PC-3 (cell line): ENCODE measurements at regions of chr20 and their contacts with region 1.

Region 1: GRCh38 chr20:53915446-53916172 is 154.8 kb downstream of the BCAS1 start:
- DNase-seq: peak; percentile 100
- ATAC-seq: peak; percentile 88
- H3K4me3 ChIP-seq: peak overlapping the region; percentile 72
- H3K27ac ChIP-seq: peak overlapping the region; percentile 84
- H3K4me1 ChIP-seq: peaks cover 48% of the 10 kb centered on the region
- H3K27me3 ChIP-seq: no peaks in the 10 kb centered on the region
- CTCF ChIP-seq: peak; percentile 99

Region 2: DNA sequence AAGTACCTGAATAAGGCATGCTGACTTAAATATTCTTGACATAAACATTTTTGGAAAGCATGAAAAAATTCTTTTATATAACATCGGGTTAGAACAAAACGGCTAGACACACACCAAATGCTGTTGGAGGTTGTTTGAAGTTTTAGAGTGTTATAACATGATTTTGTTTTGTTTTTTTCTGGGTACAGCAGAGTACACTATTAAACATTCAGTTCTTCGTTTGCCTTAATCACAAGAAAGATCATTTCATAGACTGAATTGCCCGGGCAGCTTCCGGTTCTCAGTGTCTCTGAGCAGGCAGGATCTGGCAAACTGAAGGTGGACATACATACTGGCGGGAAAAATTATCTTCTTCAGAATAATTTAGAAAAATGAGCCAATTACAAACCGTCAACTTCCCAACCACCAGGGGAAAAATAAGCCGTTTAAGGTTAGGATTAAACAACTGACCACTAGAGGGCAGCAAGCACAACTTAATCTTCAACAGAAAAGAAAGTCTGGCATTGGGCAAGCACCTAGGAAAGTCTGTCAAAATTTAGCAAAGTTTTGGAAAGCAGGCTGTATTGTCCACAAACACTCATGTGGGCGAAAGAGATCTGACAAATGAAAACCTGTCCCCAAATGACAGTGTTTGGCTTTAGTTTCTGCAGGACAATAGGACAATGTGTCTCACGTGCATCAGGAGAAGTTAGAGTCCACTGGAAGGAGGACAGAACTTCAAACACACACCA is 337.0 kb before region 1 on chr20:
- CTCF ChIA-PET with region 1: no interaction called
- POLR2A ChIA-PET with region 1: no interaction called
- intact Hi-C with region 1: loop called (anchors 1 kb)
- DNase-seq: peak; percentile 100
- ATAC-seq: peak; percentile 12
- H3K4me3 ChIP-seq: peak overlapping the region; percentile 75
- H3K27ac ChIP-seq: peak overlapping the region; percentile 88
- H3K4me1 ChIP-seq: peaks cover 59% of the 10 kb centered on the region
- H3K27me3 ChIP-seq: no peaks in the 10 kb centered on the region
- CTCF ChIP-seq: peak; percentile 99

Region 3: DNA sequence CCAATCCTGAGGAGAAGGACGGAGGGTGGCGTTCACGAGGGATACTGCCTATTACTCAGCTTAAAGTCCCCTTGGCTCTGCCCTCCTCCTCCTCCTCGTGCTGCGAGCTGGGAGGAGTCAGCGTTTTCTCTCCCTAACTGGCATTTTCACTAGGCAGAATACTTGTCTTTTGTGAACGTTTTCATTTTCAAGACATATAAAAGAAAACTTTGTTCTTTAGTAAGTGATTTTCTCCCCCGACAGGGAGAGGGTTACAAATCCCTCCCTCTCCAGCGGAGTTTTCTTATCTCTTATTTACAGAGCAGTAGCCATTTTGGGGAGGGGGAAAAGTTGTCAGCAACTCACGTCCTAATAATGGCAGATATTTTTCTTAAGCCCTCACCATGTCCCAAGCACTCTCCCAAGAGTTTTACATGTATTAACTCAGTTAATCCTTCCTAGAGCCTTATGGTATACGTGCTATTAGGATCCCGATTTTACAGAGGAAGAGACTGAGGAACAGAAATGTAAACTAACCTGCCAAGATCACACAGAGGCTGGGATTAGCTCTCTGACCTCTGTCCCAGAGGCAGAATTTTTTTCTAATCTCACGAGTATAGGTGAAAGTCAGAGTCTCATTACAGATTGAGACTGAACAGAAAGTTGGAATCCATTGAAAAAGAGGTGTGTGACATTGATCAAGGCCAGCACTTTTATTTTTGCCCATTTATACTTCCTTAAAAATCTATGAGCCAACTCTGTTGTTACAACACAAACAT is 292.0 kb before region 1 on chr20:
- CTCF ChIA-PET with region 1: interaction called, 5 read pairs
- POLR2A ChIA-PET with region 1: interaction called, 3 read pairs
- intact Hi-C with region 1: loop called (anchors 1 kb)
- DNase-seq: peak; percentile 89
- ATAC-seq: peak; percentile 62
- H3K4me3 ChIP-seq: peak overlapping the region; percentile 63
- H3K27ac ChIP-seq: peak overlapping the region; percentile 89
- H3K4me1 ChIP-seq: peaks cover 41% of the 10 kb centered on the region
- H3K27me3 ChIP-seq: no peaks in the 10 kb centered on the region
- CTCF ChIP-seq: peak; percentile 38; the same call in 1 of the 2 replicates

Region 4: GRCh38 chr20:53786445-53787267 is 129.0 kb before region 1 on chr20:
- CTCF ChIA-PET with region 1: interaction called, 5 read pairs
- POLR2A ChIA-PET with region 1: interaction called, 3 read pairs
- intact Hi-C with region 1: loop called (anchors 1 kb)
- DNase-seq: peak; percentile 71
- ATAC-seq: peak; percentile 46
- H3K4me3 ChIP-seq: peak overlapping the region; percentile 27
- H3K27ac ChIP-seq: peak overlapping the region; percentile 87
- H3K4me1 ChIP-seq: peaks cover 58% of the 10 kb centered on the region
- H3K27me3 ChIP-seq: no peaks in the 10 kb centered on the region
- CTCF ChIP-seq: peak; percentile 39

Region 5: GRCh38 chr20:53837126-53837826 is 78.3 kb before region 1 on chr20:
- CTCF ChIA-PET with region 1: no interaction called
- POLR2A ChIA-PET with region 1: interaction called, 14 read pairs
- intact Hi-C with region 1: no loop called
- DNase-seq: no peak
- ATAC-seq: no peak
- H3K4me3 ChIP-seq: no peak overlapping the region
- H3K27ac ChIP-seq: no peak overlapping the region
- H3K4me1 ChIP-seq: peaks cover 23% of the 10 kb centered on the region
- H3K27me3 ChIP-seq: no peaks in the 10 kb centered on the region
- CTCF ChIP-seq: no peak

Region 6: GRCh38 chr20:53883098-53883811 is 32.4 kb before region 1 on chr20:
- CTCF ChIA-PET with region 1: no interaction called
- POLR2A ChIA-PET with region 1: no interaction called
- intact Hi-C with region 1: no loop called
- DNase-seq: peak; percentile 89
- ATAC-seq: peak; percentile 68
- H3K4me3 ChIP-seq: no peak overlapping the region
- H3K27ac ChIP-seq: peak overlapping the region; percentile 73
- H3K4me1 ChIP-seq: peaks cover 35% of the 10 kb centered on the region
- H3K27me3 ChIP-seq: no peaks in the 10 kb centered on the region
- CTCF ChIP-seq: no peak

Region 7: DNA sequence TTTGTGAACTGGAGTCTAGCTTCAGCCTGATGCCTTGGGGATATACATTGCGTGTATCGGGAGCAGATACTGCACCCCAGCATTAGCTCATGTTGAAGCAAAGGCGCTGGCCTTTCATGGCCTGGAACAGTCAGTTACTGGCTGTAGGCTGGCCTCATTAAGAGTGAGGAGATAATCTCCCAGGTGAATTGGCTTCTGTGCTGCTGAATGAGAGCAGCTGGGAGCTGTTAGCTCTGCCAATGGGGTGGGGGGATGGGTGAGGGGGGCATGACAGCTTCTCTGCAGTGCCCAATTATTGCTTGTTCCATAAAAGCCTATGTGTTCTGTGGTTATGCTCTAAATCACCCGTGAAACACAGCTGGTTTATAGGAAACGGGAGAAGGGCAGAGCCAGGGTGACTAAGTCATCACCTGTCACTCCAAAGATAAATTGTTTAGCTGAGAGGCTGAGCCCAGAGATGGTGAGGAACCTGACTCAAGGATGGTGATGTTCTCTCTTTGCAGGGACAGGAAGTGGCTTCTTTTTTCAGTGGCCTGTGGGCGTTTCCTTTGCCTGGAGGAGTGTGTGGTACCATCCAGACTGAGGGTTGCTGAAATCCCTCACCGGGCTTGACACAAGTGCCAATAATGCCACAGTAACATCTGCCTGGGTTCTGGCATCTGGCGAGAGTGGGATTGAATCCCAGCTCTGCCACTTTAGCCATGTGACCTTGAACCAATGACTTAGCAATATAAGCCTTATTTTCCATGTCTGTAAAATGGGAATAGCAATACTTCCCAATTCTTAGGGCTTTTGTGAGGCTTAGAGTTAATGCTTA is 16.1 kb before region 1 on chr20:
- CTCF ChIA-PET with region 1: interaction called, 14 read pairs
- POLR2A ChIA-PET with region 1: interaction called, 5 read pairs
- intact Hi-C with region 1: no loop called
- DNase-seq: peak; percentile 100
- ATAC-seq: peak; percentile 88
- H3K4me3 ChIP-seq: no peak overlapping the region
- H3K27ac ChIP-seq: peak overlapping the region; percentile 79
- H3K4me1 ChIP-seq: peaks cover 41% of the 10 kb centered on the region
- H3K27me3 ChIP-seq: no peaks in the 10 kb centered on the region
- CTCF ChIP-seq: no peak

Region 8: DNA sequence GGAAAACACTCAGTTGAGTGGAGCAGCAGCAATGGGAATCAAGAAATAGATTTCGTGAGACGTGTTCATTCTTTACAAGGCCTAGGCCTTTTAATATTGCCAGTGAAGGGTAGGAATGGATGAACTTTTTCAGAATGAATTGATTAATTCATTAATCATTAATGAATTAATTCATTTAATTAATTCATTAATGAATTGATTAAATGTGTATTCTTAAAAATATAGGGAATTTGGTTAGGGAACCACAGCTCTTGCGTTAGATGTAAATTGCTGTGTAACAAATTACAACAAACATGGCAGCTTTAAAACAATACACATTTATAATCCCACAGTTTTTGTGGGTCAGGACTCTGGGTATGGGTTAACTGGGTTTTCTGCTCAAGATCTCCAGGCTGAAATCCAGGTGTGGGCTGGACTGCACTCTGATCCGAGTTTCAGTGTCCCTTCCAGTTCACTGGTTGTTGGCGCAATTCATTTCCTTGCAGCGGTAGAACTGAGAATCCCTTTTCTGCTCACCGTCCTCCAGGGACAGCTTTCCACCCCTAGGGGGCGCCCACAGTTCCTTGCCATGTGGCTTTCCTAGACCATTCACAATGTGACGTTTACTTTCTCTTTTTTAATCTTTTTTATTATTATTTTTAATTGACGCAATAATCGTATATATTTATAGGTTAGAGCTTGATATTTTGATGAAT is 187.6 kb after region 1 on chr20:
- CTCF ChIA-PET with region 1: no interaction called
- POLR2A ChIA-PET with region 1: no interaction called
- intact Hi-C with region 1: no loop called
- DNase-seq: peak; percentile 92
- ATAC-seq: peak; percentile 96
- H3K4me3 ChIP-seq: no peak overlapping the region
- H3K27ac ChIP-seq: no peak overlapping the region
- H3K4me1 ChIP-seq: no peaks in the 10 kb centered on the region
- H3K27me3 ChIP-seq: no peaks in the 10 kb centered on the region
- CTCF ChIP-seq: peak; percentile 97

Region 9: DNA sequence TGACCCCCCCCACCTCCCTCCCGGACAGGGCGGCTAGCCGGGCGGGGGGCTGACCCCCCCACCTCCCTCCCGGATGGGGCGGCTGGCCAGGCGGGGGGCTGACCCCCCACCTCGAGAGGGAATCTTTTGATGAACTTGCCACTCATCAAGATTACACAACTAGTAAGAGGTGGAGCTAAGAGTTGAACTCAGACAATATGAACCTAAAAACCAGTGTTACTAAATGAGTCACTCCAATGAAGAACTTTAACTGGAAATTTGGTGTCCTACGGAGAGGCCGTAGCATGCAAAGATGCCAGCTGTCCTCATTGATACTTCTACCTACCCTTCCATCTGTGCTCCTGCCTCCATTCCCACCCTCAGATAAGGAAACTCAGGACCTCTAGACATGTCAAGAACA is 335.1 kb after region 1 on chr20:
- CTCF ChIA-PET with region 1: no interaction called
- POLR2A ChIA-PET with region 1: no interaction called
- intact Hi-C with region 1: no loop called
- DNase-seq: no peak
- ATAC-seq: no peak
- H3K4me3 ChIP-seq: no peak overlapping the region
- H3K27ac ChIP-seq: no peak overlapping the region
- H3K4me1 ChIP-seq: peaks cover 9% of the 10 kb centered on the region
- H3K27me3 ChIP-seq: peaks cover 10% of the 10 kb centered on the region; the same call in 1 of the 2 replicates
- CTCF ChIP-seq: no peak